Activated CD4-positive, alpha-beta T cell treated with anti-CD3 and anti-CD28 coated beads, Interleukin-2, amount 10 ng/mL, durations not matched to agents 24 days and 14 days (primary cell): ENCODE measurements at regions of chr12 and their contacts with region 1.

Region 1: DNA sequence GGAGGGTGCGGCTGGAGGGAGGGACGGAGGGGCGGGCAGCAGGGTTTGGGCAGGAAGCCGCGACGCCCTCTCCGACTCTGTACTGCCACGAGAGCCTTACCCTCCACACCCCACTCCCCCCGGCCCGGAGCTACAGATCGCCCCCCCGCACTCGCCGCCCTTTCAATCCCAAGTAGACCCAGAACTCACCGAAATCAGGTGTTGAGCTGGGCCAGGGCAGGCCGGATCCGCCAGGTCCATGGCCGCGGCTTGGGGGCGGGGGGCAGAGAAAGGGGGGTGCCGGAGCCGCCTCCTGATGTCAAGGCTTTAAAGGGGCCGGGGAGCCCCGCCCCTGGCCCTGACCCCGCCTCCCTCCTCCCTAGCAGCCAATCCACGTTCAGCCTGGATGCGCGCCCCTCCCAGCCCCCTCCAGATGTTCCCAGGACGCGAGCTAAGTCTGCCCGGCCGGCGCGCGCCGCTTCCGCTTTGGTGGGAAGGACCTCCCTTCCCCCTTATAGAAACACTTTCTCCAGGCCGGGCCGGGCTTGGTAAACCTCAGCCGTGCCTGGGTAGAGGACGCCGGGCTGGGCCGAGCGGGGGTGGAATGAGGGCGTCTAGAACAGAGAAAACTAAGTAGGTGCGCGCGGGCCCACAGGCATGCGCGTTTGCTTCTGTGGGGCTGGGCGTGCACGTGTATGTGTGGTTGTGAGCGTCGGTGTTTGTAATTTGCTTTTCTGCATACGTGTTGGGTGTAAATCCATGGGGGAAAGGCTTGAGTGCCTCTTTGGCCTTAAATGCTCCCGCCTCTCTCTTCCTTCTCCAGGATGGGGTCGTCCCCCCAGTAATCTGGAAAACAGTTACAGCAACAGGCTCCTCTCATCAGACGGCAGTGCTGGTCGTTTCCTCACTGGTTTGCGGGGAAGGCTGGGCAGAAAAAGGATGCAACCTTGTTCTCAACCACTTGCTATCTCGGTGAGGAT is at the start of gene NCKAP5L:
- DNase-seq: peak; percentile 97
- H3K4me3 Mint-ChIP-seq: peak within 1 kb of the TSS; percentile 100
- H3K27ac Mint-ChIP-seq: peak within 1 kb of the TSS; percentile 95
- H3K4me1 Mint-ChIP-seq: peaks cover 16% of the 10 kb centered on the region
- H3K27me3 Mint-ChIP-seq: peaks cover 18% of the 10 kb centered on the region
- total RNA-seq, gene NCKAP5L: 4.8 and 5.0 TPM in 2 replicates

Region 2: DNA sequence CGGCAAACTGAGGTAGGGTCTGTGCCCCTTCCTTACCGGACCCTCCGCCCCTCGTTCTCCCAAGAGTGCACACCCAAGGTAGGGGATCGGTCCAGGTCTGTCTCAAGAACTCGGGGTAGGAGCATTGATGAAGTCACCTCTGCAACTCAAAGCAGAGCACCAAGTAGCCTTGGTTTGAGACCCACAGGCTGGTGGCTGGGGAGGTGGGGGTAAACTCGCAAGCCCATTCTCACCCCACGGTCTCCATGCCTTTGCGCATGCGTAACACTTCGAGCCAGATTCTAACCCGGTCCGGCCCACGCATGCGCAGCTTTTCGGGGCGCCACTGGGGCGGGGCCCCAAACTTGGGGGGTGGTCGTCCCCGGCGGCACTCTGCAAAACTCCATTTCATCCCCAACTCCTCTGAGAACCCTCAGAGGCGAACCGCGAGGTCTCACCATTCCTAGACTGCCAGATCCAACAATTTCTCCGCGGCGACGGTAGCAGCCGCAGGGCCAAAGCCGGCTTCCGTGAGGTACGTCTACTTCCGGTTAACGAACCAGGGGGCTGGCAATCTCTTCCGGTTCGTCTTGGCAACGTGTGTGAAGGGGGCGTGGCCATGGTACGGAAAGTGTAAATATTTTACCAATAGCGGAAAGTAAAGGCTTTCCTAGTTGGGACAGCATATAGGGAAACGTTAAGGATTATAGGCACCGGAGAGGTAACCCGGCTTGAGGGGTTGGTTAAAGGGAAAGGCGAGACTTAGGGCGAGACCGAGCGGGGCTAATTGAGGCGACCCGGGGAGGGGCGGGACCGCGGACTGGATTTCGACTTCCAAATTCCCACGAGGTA is 260.6 kb before region 1 on chr12 and contains the start of gene MCRS1:
- intact Hi-C with region 1: loop called (anchors 5 kb)
- DNase-seq: peak; percentile 97
- H3K4me3 Mint-ChIP-seq: peak within 1 kb of the TSS; percentile 93
- H3K27ac Mint-ChIP-seq: peak within 1 kb of the TSS; percentile 99
- H3K4me1 Mint-ChIP-seq: peaks cover 39% of the 10 kb centered on the region
- H3K27me3 Mint-ChIP-seq: no peaks in the 10 kb centered on the region
- total RNA-seq, gene MCRS1: 71.4 and 79.6 TPM in 2 replicates

Region 3: GRCh38 chr12:49750027-49750995 is 78.1 kb before region 1 on chr12:
- intact Hi-C with region 1: loop called (anchors 2 kb)
- DNase-seq: peak; percentile 77
- H3K4me3 Mint-ChIP-seq: peak overlapping the region; percentile 68
- H3K27ac Mint-ChIP-seq: peak overlapping the region; percentile 79
- H3K4me1 Mint-ChIP-seq: peaks cover 60% of the 10 kb centered on the region
- H3K27me3 Mint-ChIP-seq: no peaks in the 10 kb centered on the region

Region 4: DNA sequence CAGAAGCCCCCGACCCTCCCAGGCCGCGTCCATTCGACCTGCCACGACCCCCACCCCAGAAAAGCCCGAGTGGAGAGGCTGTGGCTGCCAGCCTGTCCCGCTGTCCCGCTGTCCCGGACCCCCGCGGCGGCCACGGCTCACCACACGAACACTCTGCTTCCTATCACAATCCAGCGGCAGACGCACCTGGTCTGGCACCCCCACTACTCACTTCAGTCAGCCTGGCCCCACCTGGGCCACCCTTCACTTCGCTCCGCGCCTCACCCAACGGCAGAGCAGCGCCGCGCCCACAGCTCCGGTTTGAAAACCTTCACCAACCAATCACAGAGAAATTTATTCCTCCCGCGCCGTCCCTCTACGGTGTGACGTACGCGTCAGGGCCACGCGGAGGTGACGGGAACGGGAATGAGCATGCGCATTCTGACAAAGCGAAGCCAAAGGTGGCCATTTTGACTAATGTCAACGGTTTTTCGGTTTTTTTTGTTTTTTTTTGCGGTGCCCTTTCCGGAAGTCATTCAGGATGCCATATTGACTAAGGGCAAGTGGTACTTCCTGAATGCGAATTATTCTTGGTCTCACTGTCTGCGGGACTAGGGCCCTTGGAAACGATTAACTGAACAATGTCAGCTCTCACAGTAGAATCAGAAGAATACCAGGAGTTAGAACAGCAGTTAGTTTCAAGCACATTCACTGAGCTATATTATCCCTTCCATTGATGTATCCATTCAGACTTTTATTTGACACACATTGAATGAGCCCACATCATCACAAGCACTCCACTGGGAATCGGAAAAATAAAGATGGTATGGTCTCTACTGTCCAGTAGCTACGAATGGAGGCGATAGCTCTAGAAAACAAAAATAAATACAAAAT is 197.0 kb after region 1 on chr12 and contains the start of gene RACGAP1:
- intact Hi-C with region 1: no loop called
- DNase-seq: peak; percentile 99
- H3K4me3 Mint-ChIP-seq: peak within 1 kb of the TSS; percentile 93
- H3K27ac Mint-ChIP-seq: peak within 1 kb of the TSS; percentile 96
- H3K4me1 Mint-ChIP-seq: peaks cover 37% of the 10 kb centered on the region
- H3K27me3 Mint-ChIP-seq: no peaks in the 10 kb centered on the region
- total RNA-seq, gene RACGAP1: 71.2 and 71.6 TPM in 2 replicates

Region 5: DNA sequence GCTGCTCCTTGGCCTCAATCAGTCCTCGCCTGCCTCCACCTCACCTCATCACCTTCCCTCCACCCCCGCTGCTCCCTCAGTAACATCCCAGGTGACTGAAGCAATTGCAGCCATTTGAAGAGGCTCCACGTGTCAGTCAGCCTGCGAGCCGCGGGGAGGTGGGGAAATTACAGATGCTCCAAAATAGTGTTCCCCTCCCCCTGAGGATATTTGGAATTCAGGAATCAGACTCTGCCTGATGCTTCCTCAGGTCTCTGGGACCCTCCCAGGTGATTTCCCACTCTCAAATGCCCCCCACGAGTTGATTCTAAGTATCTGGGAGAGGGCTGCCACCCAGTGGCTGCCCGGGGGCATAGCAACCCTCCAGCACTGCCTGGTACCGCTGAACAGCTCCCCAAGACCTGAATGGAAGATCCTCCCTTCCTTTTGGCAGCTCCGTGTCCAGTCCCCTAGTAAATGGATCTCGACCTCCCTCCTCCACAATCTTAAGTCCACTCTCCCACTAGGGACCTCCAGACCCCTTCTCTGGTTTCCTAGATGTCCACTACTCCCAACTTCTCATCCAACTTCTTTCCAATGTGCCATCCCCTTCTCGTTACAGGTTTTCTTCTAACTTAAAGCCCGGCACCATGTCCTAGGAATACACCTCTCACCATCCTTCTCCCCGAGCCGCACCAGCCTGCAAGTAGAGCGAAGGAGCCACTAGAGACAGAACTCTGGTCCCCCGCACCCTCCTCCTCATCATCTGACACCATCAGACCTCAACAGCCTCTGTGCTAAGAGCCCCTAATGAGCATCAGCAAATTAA is 227.6 kb after region 1 on chr12:
- intact Hi-C with region 1: no loop called
- DNase-seq: peak; percentile 89
- H3K4me3 Mint-ChIP-seq: peak overlapping the region; percentile 90
- H3K27ac Mint-ChIP-seq: peak overlapping the region; percentile 66
- H3K4me1 Mint-ChIP-seq: peaks cover 37% of the 10 kb centered on the region
- H3K27me3 Mint-ChIP-seq: peaks cover 40% of the 10 kb centered on the region